PC-9 (cell line): ENCODE measurements at regions of chr15 and their contacts with region 1.

Region 1: DNA sequence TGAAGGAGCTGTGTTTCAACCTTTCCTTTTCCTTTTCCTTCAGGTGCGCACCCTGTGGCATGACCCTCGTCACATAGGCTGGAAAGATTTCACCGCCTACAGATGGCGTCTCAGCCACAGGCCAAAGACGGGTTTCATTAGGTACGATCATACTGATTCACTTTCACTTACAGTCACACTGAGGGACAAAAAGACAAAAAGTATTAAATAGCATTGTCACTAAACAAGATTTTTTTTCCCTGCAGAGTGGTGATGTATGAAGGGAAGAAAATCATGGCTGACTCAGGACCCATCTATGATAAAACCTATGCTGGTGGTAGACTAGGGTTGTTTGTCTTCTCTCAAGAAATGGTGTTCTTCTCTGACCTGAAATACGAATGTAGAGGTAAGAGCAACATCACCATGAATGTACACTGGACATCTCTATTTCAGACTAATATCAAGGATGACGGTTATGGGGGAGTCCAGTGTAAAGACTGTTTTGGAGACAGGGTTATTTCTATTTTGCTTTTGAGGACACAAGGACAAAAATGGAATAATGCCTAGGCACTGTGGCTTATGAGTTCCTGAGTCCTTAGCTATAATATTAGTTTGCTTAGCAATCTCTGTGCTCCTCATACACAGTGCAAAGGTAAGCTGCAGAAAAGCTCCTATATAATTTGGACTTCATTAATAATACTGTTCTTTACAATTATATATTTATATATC is 13.3 kb downstream of the THBS1 start:
- DNase-seq: no peak
- H3K4me3 ChIP-seq: no peak overlapping the region
- H3K27ac ChIP-seq: no peak overlapping the region
- H3K4me1 ChIP-seq: no peaks in the 10 kb centered on the region
- H3K27me3 ChIP-seq: no peaks in the 10 kb centered on the region
- CTCF ChIP-seq: no peak

Region 2: GRCh38 chr15:39312984-39313383 is 281.2 kb before region 1 on chr15:
- CTCF ChIA-PET with region 1: no interaction called
- POLR2A ChIA-PET with region 1: no interaction called
- intact Hi-C with region 1: no loop called
- DNase-seq: no peak
- H3K4me3 ChIP-seq: no peak overlapping the region
- H3K27ac ChIP-seq: no peak overlapping the region
- H3K4me1 ChIP-seq: peaks cover 7% of the 10 kb centered on the region; the same call in 1 of the 2 replicates
- H3K27me3 ChIP-seq: no peaks in the 10 kb centered on the region
- CTCF ChIP-seq: no peak

Region 3: GRCh38 chr15:39472621-39473297 is 121.5 kb before region 1 on chr15:
- CTCF ChIA-PET with region 1: no interaction called
- POLR2A ChIA-PET with region 1: no interaction called
- intact Hi-C with region 1: no loop called
- DNase-seq: no peak
- H3K4me3 ChIP-seq: no peak overlapping the region
- H3K27ac ChIP-seq: no peak overlapping the region
- H3K4me1 ChIP-seq: no peaks in the 10 kb centered on the region
- H3K27me3 ChIP-seq: no peaks in the 10 kb centered on the region
- CTCF ChIP-seq: no peak

Region 4: DNA sequence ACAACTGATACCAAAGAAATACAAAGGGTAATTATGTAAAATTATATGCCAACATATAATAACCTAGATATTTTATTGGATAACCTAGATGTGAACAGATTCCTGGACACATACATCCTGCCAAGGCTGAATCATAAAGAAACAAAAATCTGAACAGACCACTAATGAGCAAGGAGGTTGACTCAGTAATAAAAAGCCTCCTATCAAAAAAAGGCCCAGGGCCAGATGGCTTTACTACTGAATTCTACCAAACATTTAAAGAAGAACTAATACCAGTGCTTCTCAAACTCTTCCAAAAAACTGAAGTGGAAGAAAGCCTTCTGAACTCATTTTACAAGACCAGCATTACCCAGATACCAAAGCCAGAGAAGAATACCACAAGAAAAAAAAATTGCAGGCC is 19.1 kb after region 1 on chr15:
- CTCF ChIA-PET with region 1: no interaction called
- POLR2A ChIA-PET with region 1: interaction called, 10 read pairs
- intact Hi-C with region 1: no loop called
- DNase-seq: no peak
- H3K4me3 ChIP-seq: no peak overlapping the region
- H3K27ac ChIP-seq: no peak overlapping the region
- H3K4me1 ChIP-seq: no peaks in the 10 kb centered on the region
- H3K27me3 ChIP-seq: no peaks in the 10 kb centered on the region
- CTCF ChIP-seq: no peak

Region 5: DNA sequence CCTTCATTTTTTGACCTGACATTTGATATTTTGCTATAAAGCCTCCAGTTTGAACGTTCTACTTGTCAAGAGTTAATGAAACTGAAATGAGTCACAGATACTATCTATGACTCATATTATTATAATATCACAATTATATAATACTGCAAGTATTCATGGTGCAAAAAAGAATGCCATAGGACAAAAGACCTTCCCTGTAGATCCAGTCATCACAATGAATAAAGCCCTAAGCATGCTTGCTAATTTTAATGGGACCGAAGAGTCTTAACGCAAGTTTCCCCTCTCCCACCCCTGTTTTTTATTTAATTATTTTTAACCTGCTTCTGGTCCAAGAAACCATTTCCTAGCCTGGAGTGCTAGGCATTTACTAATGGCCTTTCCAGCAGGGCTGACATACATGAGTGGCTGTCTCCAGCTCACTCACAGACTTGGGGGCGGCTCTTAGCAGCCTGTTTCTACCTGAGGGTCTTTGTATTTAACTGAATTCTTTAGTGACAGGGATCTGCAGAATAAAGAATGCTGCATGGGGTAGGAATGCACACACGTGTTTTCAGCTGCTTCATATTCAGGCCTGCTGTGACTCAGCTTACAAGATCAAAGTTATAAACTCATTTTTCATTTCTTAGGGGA is 47.9 kb after region 1 on chr15:
- CTCF ChIA-PET with region 1: no interaction called
- POLR2A ChIA-PET with region 1: no interaction called
- intact Hi-C with region 1: loop called (anchors 5 kb)
- DNase-seq: peak; percentile 33 to 87
- H3K4me3 ChIP-seq: peak overlapping the region; percentile 45; the same call in 1 of the 2 replicates
- H3K27ac ChIP-seq: peak overlapping the region; percentile 99
- H3K4me1 ChIP-seq: peaks cover 29% of the 10 kb centered on the region
- H3K27me3 ChIP-seq: no peaks in the 10 kb centered on the region
- CTCF ChIP-seq: no peak

Region 6: DNA sequence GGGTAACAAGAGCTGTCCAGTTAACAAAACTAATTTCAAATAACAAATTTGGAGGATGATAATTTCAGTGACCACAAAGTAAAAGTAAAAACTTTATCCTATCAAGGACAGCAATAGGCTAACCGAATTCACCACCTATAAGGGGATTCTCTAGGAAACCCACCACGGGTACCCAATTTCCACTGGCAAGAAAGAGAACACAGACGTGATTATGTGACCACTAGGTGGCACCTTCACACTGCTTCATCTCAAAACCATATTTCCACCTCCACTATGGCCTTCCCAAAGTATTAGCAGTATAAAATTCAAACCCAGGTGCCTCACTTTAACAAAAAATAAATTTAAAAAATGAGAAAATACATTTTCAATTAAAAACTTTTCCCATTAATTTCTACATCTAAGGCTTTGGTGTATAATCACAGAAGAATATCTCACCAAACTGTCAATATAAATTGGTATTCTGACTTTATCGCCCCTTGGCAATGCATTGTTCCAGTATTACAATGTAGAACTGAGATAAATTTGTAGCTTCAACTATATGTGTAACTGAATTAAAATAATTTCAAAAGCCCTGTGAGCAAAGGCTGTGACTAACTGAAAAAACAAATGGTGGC is 91.9 kb after region 1 on chr15:
- CTCF ChIA-PET with region 1: no interaction called
- POLR2A ChIA-PET with region 1: interaction called, 4 read pairs
- intact Hi-C with region 1: loop called (anchors 5 kb)
- DNase-seq: peak in 1 of 2 experiments; percentile 34
- H3K4me3 ChIP-seq: no peak overlapping the region
- H3K27ac ChIP-seq: no peak overlapping the region
- H3K4me1 ChIP-seq: no peaks in the 10 kb centered on the region
- H3K27me3 ChIP-seq: no peaks in the 10 kb centered on the region
- CTCF ChIP-seq: peak; percentile 82

Region 7: DNA sequence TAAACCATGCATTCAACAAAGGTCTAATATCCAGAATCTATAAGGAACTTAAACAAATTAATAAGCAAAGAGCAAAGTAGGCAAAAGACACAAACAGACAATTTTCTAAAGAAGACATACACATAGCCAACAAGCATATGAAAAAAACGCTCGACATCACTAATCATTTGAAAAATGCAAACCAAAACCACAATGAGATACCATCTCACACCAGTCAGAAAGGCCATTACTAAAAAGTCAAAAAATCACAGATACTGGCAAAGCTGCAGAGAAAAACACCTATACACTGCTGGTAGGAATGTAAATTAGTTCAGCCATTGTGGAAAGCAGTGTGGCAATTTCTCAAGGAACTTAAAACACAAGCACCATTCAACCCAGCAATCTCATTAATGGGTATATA is 134.6 kb after region 1 on chr15:
- CTCF ChIA-PET with region 1: no interaction called
- POLR2A ChIA-PET with region 1: no interaction called
- intact Hi-C with region 1: no loop called
- DNase-seq: no peak
- H3K4me3 ChIP-seq: no peak overlapping the region
- H3K27ac ChIP-seq: no peak overlapping the region
- H3K4me1 ChIP-seq: no peaks in the 10 kb centered on the region
- H3K27me3 ChIP-seq: no peaks in the 10 kb centered on the region
- CTCF ChIP-seq: no peak